ENCODE measurements at regions of chr15 and their contacts with region 1.

Region 1: GRCh38 chr15:41331833-41332787 is at the start of gene OIP5:
- DNase-seq: peak; percentile 98
- H3K4me3 ChIP-seq: peak within 1 kb of the TSS; percentile 74
- H3K27me3 ChIP-seq: no peaks in the 10 kb centered on the region
- CTCF ChIP-seq: peak; percentile 84
- polyA plus RNA-seq, gene OIP5: 4.0 and 5.6 TPM in 2 replicates

Region 2: GRCh38 chr15:41284427-41285177 is 47.5 kb before region 1 on chr15:
- CTCF ChIA-PET with region 1: interaction called, 16 read pairs
- POLR2A ChIA-PET with region 1: no interaction called
- DNase-seq: no peak
- H3K4me3 ChIP-seq: peak overlapping the region; percentile 90
- H3K27me3 ChIP-seq: no peaks in the 10 kb centered on the region
- CTCF ChIP-seq: no peak

Measured in BJ (cell line).